CD4-positive, alpha-beta memory T cell (primary cell): ENCODE measurements at regions of chr1 and their contacts with region 1.

Region 1: GRCh38 chr1:119743781-119744597 is 24.7 kb downstream of the HMGCS2 start:
- DNase-seq: peak in 4 of 5 donors; percentile 11 to 15 (median 14)
- H3K4me3 ChIP-seq: no peak overlapping the region
- H3K4me3 Mint-ChIP-seq: no peak overlapping the region
- H3K27ac ChIP-seq: no peak overlapping the region
- H3K27ac Mint-ChIP-seq: no peak overlapping the region
- H3K4me1 ChIP-seq: no peaks in the 10 kb centered on the region
- H3K4me1 Mint-ChIP-seq: peaks cover 0 to 2% (median 0%) of the 10 kb centered on the region in 4 donors
- H3K27me3 ChIP-seq: no peaks in the 10 kb centered on the region
- H3K27me3 Mint-ChIP-seq: no peaks in the 10 kb centered on the region

Region 2: GRCh38 chr1:119727996-119728395 is 16.0 kb before region 1 on chr1:
- CTCF ChIA-PET with region 1: interaction called, 44 read pairs
- POLR2A ChIA-PET with region 1: no interaction called
- intact Hi-C with region 1: no loop called
- DNase-seq: no peak
- H3K4me3 ChIP-seq: no peak overlapping the region
- H3K4me3 Mint-ChIP-seq: no peak overlapping the region
- H3K27ac ChIP-seq: no peak overlapping the region
- H3K27ac Mint-ChIP-seq: peak overlapping the region in 1 of 7 donors; percentile 1
- H3K4me1 ChIP-seq: no peaks in the 10 kb centered on the region
- H3K4me1 Mint-ChIP-seq: no peaks in the 10 kb centered on the region
- H3K27me3 ChIP-seq: no peaks in the 10 kb centered on the region
- H3K27me3 Mint-ChIP-seq: no peaks in the 10 kb centered on the region